ENCODE measurements at regions of chrX and their contacts with region 1.

Region 1: DNA sequence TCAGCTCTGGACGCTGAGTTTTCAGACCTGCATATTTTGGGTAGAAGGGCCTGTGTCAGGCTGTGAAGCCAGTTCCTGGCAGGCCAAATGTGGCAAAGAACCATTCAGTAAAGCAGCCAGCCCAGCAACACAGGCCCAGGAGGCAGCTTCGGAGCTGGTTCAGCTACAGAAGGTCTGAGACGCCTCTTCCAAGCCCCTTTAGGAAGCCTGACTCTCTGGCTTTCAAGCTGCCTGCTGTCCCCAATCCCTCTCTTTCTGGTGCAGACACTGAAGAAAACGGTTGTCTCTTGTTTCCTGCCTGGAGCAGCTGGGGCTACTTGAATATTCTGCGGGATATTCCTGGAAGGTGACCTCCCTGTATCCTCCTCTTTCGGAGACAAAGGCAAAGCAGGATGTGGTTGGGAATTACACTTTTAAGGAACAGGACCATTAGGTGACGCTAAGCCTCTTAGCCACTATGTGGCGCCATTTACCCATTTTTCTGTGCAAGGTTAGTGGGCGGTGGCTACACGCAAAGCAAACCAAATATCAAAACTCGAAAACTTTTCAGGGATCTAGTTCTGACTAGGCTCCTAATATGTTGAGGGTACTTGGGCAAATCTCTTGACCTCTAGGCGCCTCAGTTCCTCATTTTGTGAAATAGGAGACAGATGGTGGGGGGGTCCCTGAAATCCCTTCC is 47.2 kb upstream of the LAS1L start:
- DNase-seq: peak; percentile 65 to 87
- H3K4me3 ChIP-seq: no peak overlapping the region
- H3K27ac ChIP-seq: no peak overlapping the region
- H3K4me1 ChIP-seq: peaks cover 0 to 9% (median 5%) of the 10 kb centered on the region in 4 donors
- H3K27me3 ChIP-seq: peaks cover 0 to 3% (median 0%) of the 10 kb centered on the region in 3 donors
- CTCF ChIP-seq: peak in 4 of 7 experiments; percentile 50 to 71 (median 58)
- EP300 ChIP-seq: no peak
- POLR2A ChIP-seq: no peak

Region 2: DNA sequence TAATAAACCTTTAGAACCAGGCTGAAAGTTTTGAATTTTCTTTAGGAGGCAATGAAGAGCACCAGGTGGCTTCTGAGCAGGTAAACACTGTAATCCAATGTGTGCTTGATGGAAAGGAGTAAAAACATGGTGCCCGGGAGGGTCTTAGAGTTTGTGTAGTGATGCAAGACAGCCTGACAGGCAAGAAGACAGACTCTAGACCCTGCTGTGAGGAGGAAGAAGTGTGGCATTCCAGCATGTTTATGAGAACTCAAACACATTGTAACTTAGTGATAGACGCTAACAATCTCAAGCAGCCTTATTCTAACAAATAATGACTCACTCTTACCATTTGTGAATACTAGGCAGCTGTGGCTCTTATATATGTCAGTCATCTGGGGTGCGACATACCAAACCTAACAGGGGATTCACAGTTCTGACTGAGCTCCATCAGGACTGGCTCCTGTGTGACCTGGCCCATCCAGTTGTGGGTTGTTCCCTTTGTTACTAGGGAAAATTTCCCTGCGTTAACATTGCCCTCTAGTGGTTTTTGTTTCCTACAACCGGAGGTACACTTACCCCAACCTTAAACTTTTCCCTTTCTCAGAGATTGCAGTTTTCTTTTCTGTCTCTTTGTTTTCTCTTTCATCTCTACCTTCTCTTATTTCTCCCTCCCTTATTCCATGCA is 404.3 kb after region 1 on chrX:
- intact Hi-C with region 1: loop called (anchors 5 kb)
- DNase-seq: peak in 1 of 2 donors; percentile 74
- H3K4me3 ChIP-seq: no peak overlapping the region
- H3K27ac ChIP-seq: no peak overlapping the region
- H3K4me1 ChIP-seq: no peaks in the 10 kb centered on the region
- H3K27me3 ChIP-seq: peaks cover 0 to 3% (median 0%) of the 10 kb centered on the region in 3 donors
- CTCF ChIP-seq: peak in 3 of 7 experiments; percentile 18 to 56 (median 47)
- EP300 ChIP-seq: no peak
- POLR2A ChIP-seq: no peak

Measured in stomach (tissue), 19 donors.